AG04450 (cell line): ENCODE measurements at regions of chr17 and their contacts with region 1.

Region 1: DNA sequence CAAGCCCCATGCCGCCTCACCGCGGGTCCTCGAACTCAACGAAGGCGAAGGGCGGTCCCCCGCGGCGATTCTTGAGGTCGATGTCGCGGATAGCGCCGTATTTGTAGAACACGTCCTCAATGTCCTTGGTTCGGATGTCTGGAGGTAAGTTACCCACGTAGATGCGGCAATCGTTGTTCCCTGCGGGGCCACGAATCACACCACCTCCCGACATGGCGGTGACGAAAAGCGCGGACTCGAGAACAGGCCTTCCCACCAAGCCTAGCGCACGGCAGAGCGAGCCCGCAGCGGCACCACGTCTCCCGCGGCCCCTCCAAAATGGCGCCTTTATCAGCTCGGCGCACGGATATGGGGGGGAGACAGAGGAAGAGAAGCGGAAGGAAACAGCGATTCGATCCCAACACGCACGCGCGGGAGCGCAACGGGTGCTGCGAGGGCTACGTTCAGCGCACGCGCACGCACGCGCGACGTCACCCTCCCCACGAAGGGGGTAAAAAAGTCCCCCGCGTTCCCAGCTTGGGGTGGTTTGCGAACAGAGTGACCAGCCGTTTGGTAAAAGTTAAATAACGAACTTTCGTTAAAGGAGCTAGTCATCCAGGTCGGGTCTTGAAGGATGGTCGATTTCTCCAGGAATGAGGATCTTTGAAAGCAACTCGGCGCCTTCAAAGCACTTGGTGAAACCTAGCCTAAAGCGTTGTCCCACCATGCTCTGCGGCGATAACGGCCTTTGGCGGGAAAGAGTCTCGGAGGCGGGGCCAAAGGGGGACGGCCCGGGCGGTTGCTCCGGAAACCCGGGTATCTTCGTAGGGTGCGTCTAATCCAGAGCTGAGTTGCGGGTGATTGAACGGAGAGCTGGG is at the start of gene SRSF1:
- DNase-seq: peak; percentile 94
- H3K4me3 ChIP-seq: peak within 1 kb of the TSS; percentile 99
- H3K27ac ChIP-seq: peak within 1 kb of the TSS; percentile 96
- H3K27me3 ChIP-seq: no peaks in the 10 kb centered on the region
- CTCF ChIP-seq: no peak
- polyA plus RNA-seq, gene SRSF1: 215 and 249 TPM in 2 replicates

Region 2: DNA sequence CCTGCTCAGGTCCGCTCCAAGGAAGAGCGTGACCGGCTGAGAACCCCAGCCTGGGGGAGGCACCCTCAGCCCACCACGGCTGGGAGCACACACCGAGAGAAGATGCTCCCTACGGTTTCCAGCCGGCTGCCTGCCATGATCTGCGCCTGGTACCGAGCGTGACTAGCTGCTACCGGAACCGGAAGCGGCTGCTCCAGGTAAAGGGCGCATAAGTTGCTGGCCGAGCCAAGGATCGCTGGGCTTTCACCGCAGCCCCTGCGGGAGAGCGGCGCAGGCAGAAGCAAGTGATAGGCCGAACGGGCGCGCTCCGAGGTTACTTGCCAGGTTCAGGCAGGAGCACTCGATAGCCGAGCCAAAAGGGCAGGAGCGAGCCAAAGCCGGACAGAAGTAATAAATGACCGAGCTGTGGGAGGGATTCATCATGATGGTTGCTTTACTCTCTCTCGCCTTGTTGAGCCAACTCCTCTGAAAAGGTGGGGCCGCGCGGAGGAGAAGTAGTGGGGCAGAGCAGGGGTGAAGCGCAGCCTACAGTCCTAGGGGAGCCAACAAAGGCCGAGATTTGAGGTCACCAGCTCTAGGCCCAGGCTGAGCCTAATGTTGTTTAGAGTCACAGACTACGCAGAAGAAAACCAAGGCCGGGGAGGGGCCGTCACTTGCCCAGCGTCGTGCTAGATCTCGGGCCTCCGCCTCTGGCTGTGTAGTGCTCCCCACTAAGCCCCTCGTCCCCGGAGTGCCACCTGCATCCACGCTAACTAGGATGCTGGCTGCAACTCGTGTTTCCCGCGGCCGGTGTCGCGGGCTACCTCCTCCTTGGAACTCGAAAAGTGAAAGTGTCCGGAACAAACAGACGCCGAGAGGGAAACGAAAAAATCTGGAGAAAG is 157.0 kb before region 1 on chr17 and contains the start of gene MRPS23:
- CTCF ChIA-PET with region 1: interaction called, 661 read pairs
- POLR2A ChIA-PET with region 1: interaction called, 14 read pairs
- DNase-seq: peak; percentile 97
- H3K4me3 ChIP-seq: peak within 1 kb of the TSS; percentile 99
- H3K27ac ChIP-seq: peak within 1 kb of the TSS; percentile 85
- H3K27me3 ChIP-seq: no peaks in the 10 kb centered on the region
- CTCF ChIP-seq: no peak
- polyA plus RNA-seq, gene MRPS23: 27.5 and 34.1 TPM in 2 replicates

Region 3: GRCh38 chr17:57875309-57876115 is 131.6 kb before region 1 on chr17:
- CTCF ChIA-PET with region 1: interaction called, 6 read pairs
- POLR2A ChIA-PET with region 1: interaction called, 16 read pairs
- DNase-seq: peak; percentile 97
- H3K4me3 ChIP-seq: peak overlapping the region; percentile 42
- H3K27ac ChIP-seq: peak overlapping the region; percentile 100
- H3K27me3 ChIP-seq: no peaks in the 10 kb centered on the region
- CTCF ChIP-seq: peak; percentile 79

Region 4: DNA sequence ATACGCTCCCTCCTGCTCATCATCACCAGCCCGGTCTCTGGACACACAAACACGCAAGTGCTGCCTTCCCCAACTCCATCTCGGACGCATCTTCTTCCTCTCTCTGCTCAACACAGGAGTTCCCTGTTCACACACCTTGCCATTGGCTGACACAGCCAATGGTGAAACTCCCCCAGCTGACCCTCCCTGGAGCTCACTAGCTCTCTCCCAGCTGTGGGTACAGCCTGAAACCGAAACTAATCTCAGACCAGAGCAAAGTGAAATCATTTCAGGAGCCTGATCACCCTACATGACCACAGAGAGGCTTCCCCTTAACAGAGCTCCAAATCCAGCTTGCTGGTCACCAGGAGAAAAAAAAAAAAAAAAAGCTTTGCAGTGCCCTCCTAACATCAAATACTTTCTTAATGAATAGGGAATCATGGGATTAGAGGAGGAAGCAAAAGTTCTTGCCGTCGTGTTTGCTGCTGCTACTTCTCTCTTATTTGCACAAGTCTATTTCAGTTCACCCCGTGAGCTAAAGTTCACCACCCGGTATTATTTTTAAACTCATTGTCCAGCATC is 60.3 kb before region 1 on chr17:
- CTCF ChIA-PET with region 1: no interaction called
- POLR2A ChIA-PET with region 1: interaction called, 10 read pairs
- DNase-seq: peak; percentile 55
- H3K4me3 ChIP-seq: peak overlapping the region; percentile 53
- H3K27ac ChIP-seq: peak overlapping the region; percentile 81
- H3K27me3 ChIP-seq: no peaks in the 10 kb centered on the region
- CTCF ChIP-seq: no peak

Region 5: GRCh38 chr17:58052945-58053846 is 46.0 kb after region 1 on chr17:
- CTCF ChIA-PET with region 1: no interaction called
- POLR2A ChIA-PET with region 1: no interaction called
- DNase-seq: no peak
- H3K4me3 ChIP-seq: no peak overlapping the region
- H3K27ac ChIP-seq: no peak overlapping the region
- H3K27me3 ChIP-seq: peaks cover 11% of the 10 kb centered on the region
- CTCF ChIP-seq: no peak

Region 6: DNA sequence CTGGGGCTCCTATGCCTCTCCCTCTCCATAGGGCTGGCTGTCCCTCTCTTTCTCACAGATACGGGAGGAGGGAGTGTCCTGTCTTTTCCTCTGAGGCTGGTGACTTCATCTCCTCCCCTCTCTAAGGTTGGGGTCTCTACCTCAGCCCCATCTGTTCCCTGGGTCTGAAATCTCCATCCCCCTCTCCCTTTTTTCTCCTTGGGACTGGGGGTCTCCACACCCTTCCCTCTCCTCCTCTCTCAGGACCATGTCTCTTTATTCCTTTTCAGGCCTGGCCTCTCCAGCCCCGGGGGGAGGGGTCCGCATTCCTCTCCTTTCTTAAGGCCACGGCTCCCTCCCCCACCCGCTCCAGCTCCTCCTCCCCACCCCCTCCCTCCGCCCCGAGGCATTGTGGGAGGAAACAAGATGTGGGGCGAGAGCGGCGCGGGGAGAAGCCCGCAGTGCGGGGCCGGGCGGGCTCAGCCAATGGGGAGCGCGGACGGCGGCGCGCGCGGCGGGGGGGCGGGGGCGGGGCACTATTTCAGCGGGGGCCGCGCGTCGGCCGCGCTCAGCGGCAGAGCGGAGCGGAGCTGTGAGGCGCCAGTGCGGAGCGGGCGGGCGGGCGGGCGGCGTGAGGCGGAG is 75.8 kb after region 1 on chr17 and contains the start of gene DYNLL2:
- CTCF ChIA-PET with region 1: interaction called, 3 read pairs
- POLR2A ChIA-PET with region 1: interaction called, 44 read pairs
- DNase-seq: peak; percentile 79
- H3K4me3 ChIP-seq: peak within 1 kb of the TSS; percentile 79
- H3K27ac ChIP-seq: peak within 1 kb of the TSS; percentile 39
- H3K27me3 ChIP-seq: peaks cover 10% of the 10 kb centered on the region
- CTCF ChIP-seq: no peak
- polyA plus RNA-seq, gene DYNLL2: 16.7 and 18.2 TPM in 2 replicates

Region 7: GRCh38 chr17:58112970-58113631 is 105.9 kb after region 1 on chr17:
- CTCF ChIA-PET with region 1: interaction called, 12 read pairs
- POLR2A ChIA-PET with region 1: no interaction called
- DNase-seq: no peak
- H3K4me3 ChIP-seq: no peak overlapping the region
- H3K27ac ChIP-seq: peak overlapping the region; percentile 11
- H3K27me3 ChIP-seq: peaks cover 9% of the 10 kb centered on the region
- CTCF ChIP-seq: peak; percentile 96